PC-3 (cell line): ENCODE measurements at regions of chr12 and their contacts with region 1.

Region 1: GRCh38 chr12:65609359-65609771 is 214.9 kb upstream of the HMGA2 start:
- DNase-seq: peak; percentile 94
- ATAC-seq: peak; percentile 74
- H3K4me3 ChIP-seq: no peak overlapping the region
- H3K27ac ChIP-seq: peak overlapping the region; percentile 96
- H3K4me1 ChIP-seq: peaks cover 74% of the 10 kb centered on the region
- H3K27me3 ChIP-seq: no peaks in the 10 kb centered on the region
- CTCF ChIP-seq: peak; percentile 66

Region 2: DNA sequence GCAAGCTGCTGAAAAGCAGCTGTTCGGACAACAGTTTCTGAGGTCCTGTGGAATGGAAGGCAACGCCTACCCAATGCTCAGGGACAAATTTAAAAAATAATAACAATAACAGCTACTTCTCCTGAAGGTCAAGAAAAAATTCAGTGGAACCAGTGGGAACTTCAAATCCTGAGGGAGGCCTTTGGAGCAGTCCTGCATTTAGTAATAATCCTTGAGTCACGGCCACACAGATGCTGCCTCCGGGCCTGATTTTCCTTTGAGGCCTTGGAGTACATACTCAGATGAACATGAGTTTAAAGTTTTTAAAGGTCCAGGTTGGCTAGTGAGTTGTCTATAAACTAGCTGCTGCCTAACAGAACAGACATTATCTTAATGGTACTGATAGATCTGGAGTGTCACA is 62.8 kb before region 1 on chr12:
- CTCF ChIA-PET with region 1: no interaction called
- POLR2A ChIA-PET with region 1: no interaction called
- intact Hi-C with region 1: no loop called
- DNase-seq: no peak
- ATAC-seq: no peak
- H3K4me3 ChIP-seq: no peak overlapping the region
- H3K27ac ChIP-seq: no peak overlapping the region
- H3K4me1 ChIP-seq: no peaks in the 10 kb centered on the region
- H3K27me3 ChIP-seq: no peaks in the 10 kb centered on the region
- CTCF ChIP-seq: no peak

Region 3: DNA sequence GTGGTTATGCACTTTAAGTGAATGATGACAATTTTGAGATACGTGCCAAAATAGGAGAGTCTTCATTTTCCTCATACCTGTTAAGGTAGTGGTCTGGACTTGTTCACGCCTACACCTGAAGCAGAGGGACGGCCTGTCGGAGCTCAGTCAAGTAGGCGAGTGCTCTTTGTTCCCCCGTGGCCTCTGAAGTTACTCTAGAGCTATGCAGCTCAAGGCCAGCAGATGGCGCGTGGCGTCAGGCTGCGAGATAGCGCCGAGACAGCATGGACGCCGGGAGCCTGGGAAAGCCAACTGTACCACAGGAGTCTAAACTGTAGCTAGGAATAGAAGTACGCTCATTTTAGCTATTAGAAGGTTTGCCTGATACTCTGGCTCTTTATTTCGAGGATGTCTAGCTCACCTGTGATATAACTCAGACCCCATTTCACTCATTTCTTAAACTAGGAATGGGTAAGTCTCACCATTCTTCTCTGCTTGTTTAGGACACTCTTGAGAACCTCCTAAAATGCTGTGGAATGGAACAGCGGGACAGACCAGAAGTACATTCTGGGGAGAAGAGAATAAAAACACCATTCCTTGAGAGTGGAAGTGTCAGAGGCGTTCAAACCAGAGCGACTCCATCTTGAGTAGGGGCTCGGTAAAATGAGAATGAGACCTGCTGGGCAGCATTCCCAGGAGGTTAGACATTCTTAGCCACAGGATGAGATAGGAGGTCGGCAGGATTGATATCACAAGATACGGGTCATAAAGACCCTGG is 52.5 kb before region 1 on chr12:
- CTCF ChIA-PET with region 1: interaction called, 21 read pairs
- POLR2A ChIA-PET with region 1: no interaction called
- intact Hi-C with region 1: no loop called
- DNase-seq: peak; percentile 95
- ATAC-seq: peak; percentile 99
- H3K4me3 ChIP-seq: no peak overlapping the region
- H3K27ac ChIP-seq: peak overlapping the region; percentile 56
- H3K4me1 ChIP-seq: peaks cover 22% of the 10 kb centered on the region
- H3K27me3 ChIP-seq: no peaks in the 10 kb centered on the region
- CTCF ChIP-seq: peak; percentile 94

Region 4: DNA sequence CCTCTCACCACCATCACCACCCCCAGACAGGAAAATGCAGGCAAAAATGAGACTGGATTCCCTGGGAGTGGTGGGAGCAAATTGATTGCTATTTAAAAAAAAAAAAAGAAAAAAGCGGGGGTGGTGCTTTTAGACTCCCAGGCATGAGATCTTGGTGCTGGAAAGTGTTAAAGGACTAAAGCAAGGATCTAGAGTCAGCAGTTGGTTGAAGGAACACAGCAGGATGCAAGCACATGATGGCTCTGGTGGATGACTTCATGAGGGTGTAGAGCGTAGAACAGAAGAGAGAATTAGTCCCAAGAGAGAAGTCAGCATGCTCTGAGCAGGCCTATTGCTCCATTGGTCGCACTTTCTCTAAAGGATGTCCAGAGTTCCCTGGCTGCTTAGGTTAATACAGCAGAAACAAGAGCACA is 31.1 kb after region 1 on chr12:
- CTCF ChIA-PET with region 1: interaction called, 8 read pairs
- POLR2A ChIA-PET with region 1: interaction called, 19 read pairs
- intact Hi-C with region 1: no loop called
- DNase-seq: no peak
- ATAC-seq: no peak
- H3K4me3 ChIP-seq: no peak overlapping the region
- H3K27ac ChIP-seq: no peak overlapping the region
- H3K4me1 ChIP-seq: peaks cover 59% of the 10 kb centered on the region
- H3K27me3 ChIP-seq: no peaks in the 10 kb centered on the region
- CTCF ChIP-seq: no peak

Region 5: DNA sequence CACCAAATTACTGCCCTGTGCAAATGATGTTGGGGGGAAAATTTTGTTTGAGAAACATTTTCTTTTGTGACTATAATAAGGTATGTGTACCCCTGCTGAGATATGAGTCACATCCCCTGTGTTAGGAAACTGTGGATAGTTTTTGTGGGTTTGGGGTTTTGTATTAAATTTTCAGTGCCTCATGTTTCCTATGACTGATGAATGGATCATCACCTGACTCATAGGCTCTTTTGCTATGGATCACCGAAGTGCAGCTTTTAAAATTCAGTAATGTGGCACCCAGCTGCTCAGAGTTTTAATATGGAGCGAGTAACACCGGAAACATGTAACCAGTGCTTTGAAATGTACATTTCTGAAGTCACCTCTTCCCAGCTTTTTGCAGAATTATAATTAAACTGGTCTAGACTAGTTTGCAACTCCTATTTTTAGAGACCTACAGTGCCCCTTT is 47.6 kb after region 1 on chr12:
- CTCF ChIA-PET with region 1: no interaction called
- POLR2A ChIA-PET with region 1: interaction called, 5 read pairs
- intact Hi-C with region 1: loop called (anchors 2 kb)
- DNase-seq: peak; percentile 99
- ATAC-seq: peak; percentile 85
- H3K4me3 ChIP-seq: no peak overlapping the region
- H3K27ac ChIP-seq: peak overlapping the region; percentile 99
- H3K4me1 ChIP-seq: peaks cover 35% of the 10 kb centered on the region
- H3K27me3 ChIP-seq: no peaks in the 10 kb centered on the region
- CTCF ChIP-seq: no peak

Region 6: DNA sequence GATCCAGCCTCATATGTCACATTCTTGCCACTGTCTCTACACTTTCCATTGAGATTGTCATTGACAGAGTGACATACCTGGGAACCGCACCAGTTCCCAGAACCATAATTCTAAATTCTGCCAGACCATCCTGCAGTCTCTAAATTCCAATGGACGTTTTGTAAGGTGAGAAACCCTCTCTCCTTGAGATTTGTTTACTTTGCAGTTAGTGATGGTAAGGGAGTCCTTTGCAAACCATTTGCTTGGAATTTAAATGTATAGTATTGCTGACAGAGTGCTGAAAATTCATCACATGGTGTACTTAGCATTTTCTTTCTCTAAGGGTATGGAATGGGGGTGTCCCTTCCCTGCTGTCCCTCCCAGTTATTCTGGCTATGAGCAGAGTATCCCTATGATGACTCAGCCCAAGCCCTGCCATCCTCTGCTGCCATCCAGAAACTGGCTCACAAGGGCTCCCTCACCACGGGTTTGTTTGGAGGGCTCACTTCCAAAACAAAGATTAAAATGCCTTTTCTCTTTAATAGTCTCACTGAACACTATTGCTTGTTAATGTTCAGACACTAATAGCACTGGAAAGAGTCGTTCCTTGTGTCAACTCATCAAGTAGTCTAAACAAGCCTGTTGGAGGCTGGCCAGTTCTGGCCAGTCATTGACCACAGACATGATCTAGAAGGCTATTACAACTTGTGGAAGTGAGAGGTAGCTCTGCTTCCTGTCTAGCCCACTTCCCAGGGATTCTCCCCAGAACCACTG is 85.9 kb after region 1 on chr12:
- CTCF ChIA-PET with region 1: interaction called, 4 read pairs
- POLR2A ChIA-PET with region 1: interaction called, 4 read pairs
- intact Hi-C with region 1: loop called (anchors 1 kb)
- DNase-seq: peak; percentile 99
- ATAC-seq: peak; percentile 90
- H3K4me3 ChIP-seq: no peak overlapping the region
- H3K27ac ChIP-seq: peak overlapping the region; percentile 85
- H3K4me1 ChIP-seq: peaks cover 45% of the 10 kb centered on the region
- H3K27me3 ChIP-seq: no peaks in the 10 kb centered on the region
- CTCF ChIP-seq: no peak

Region 7: DNA sequence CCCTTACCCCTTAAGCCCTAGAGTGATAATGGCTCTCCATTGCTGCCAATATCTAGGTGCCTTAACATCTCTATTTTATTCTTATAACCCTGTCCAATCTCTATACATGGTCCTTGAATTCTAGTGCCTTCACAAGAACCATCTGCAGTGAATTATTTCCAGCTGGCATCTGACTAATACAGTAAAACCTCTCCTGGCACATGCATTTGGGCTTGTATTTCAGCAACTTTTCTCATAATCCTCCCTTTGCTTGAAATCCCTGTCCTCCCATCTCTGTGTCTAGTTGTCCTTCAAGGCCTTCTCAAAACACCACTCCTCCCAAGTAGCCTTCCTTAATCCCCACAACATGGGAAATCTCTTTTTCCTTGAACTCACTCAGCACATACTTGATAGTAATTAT is 200.7 kb after region 1 on chr12:
- CTCF ChIA-PET with region 1: no interaction called
- POLR2A ChIA-PET with region 1: no interaction called
- intact Hi-C with region 1: no loop called
- DNase-seq: no peak
- ATAC-seq: no peak
- H3K4me3 ChIP-seq: no peak overlapping the region
- H3K27ac ChIP-seq: no peak overlapping the region
- H3K4me1 ChIP-seq: peaks cover 18% of the 10 kb centered on the region
- H3K27me3 ChIP-seq: no peaks in the 10 kb centered on the region
- CTCF ChIP-seq: no peak

Region 8: GRCh38 chr12:65823513-65824375 is 214.4 kb after region 1 on chr12:
- CTCF ChIA-PET with region 1: no interaction called
- POLR2A ChIA-PET with region 1: interaction called, 3 read pairs
- intact Hi-C with region 1: loop called (anchors 1 kb)
- DNase-seq: peak; percentile 93
- ATAC-seq: peak; percentile 48
- H3K4me3 ChIP-seq: peak overlapping the region; percentile 92
- H3K27ac ChIP-seq: peak overlapping the region; percentile 95
- H3K4me1 ChIP-seq: peaks cover 37% of the 10 kb centered on the region
- H3K27me3 ChIP-seq: no peaks in the 10 kb centered on the region
- CTCF ChIP-seq: no peak